Activated CD4-positive, alpha-beta memory T cell treated with anti-CD3 and anti-CD28 coated beads for 36 hours (primary cell): ENCODE measurements at regions of chr12 and their contacts with region 1.

Region 1: GRCh38 chr12:89252284-89252683 is 100.0 kb downstream of the DUSP6 start:
- DNase-seq: peak; percentile 21
- H3K4me3 Mint-ChIP-seq: no peak overlapping the region
- H3K27ac Mint-ChIP-seq: peak overlapping the region; percentile 81
- H3K4me1 Mint-ChIP-seq: peaks cover 34% of the 10 kb centered on the region
- H3K27me3 Mint-ChIP-seq: no peaks in the 10 kb centered on the region

Region 2: DNA sequence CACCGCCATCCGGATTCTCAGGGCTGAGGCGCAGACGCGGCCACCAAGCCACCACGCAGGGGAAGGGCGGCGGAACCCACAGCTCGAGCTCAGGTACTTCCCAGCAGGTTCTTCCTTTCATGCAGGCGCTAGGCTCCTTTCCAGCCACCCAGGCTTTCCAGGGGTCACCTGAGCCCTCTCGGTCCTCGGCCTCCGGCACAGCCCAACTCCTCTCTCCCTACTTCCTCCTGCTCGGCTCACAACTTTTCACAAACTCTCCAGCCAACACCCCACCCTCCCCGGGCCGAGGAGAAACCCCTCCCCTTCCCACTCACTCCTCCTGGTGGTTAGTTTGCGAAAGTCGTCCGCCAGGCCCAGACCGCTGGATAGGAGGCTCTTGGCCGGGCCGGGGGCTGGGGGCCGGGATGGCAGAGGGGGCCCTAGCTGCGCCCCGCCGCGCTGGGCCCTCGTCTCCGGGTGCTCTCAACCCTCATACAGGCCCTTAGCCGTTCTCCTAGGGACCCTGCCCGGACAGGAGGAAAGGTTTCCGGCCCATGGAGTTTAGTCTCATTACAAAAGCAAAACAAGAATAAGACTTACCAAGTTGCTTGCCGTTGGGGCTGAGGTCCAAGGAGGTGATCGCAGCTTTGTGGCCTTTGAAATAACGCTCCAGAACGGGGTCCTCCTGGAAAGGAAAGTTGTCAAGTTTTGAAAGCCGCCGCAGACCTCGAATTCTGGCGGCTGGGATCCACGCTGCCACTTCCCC is 272.4 kb after region 1 on chr12 and contains the start of gene GALNT4:
- CTCF ChIA-PET with region 1: no interaction called
- POLR2A ChIA-PET with region 1: no interaction called
- intact Hi-C with region 1: loop called (anchors 2 kb)
- DNase-seq: peak; percentile 86
- H3K4me3 Mint-ChIP-seq: peak within 1 kb of the TSS; percentile 99
- H3K27ac Mint-ChIP-seq: peak within 1 kb of the TSS; percentile 98
- H3K4me1 Mint-ChIP-seq: peaks cover 45% of the 10 kb centered on the region
- H3K27me3 Mint-ChIP-seq: no peaks in the 10 kb centered on the region
- total RNA-seq, gene GALNT4: 5.8 to 6.0 TPM